Lower leg skin (tissue), 4 donors: ENCODE measurements at regions of chr14 and their contacts with region 1.

Region 1: GRCh38 chr14:96698960-96699539 is 98.1 kb upstream of the VRK1 start:
- DNase-seq: no peak
- H3K4me3 ChIP-seq: no peak overlapping the region
- CTCF ChIP-seq: no peak
- POLR2A ChIP-seq: no peak

Region 2: DNA sequence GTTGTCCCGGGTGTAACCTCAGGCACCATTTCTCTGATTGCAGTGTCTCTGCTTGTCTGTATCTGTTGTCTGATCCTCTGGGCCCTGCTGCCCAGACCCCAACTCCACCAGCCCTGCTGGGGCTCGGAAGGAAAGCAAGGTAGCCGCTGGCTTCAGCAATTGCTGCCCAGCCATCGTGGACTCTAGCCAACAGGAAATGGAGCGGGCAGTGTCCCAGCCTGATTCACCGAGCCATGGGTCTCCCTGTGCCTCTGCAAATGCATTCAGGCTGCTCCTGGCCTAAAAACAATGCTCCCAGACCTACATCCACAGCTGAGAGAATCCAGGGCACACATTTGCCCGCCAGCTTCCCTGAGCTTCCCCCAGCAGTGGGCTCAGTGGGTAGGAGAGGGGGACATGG is 813.2 kb before region 1 on chr14:
- intact Hi-C with region 1: no loop called
- DNase-seq: no peak
- H3K4me3 ChIP-seq: no peak overlapping the region
- CTCF ChIP-seq: no peak
- POLR2A ChIP-seq: no peak

Region 3: GRCh38 chr14:96734076-96734622 is 35.1 kb after region 1 on chr14:
- intact Hi-C with region 1: no loop called
- DNase-seq: no peak
- H3K4me3 ChIP-seq: no peak overlapping the region
- CTCF ChIP-seq: no peak
- POLR2A ChIP-seq: no peak

Region 4: DNA sequence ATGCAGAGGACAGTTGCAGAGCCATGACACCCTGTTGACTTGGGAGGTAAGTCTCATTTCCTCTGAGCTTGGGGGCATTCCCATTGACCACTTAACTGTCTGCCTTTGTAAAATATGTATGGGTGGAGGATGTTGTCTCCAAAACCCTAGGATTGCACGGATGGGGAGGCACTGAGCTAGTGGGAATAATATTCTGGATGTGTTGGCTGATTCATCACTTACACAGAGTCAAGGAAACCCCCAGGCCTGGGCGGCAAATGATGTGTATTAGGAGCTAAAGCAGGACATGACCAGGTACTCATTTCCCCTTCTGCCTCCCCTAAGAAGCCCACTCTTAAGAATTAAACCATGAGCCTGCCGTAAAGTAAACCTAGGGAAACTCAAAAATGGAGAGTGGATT is 417.5 kb after region 1 on chr14:
- intact Hi-C with region 1: loop called (anchors 5 kb)
- DNase-seq: peak in 1 of 2 donors; percentile 52
- H3K4me3 ChIP-seq: no peak overlapping the region
- CTCF ChIP-seq: no peak
- POLR2A ChIP-seq: no peak